HepG2 (cell line): ENCODE measurements at regions of chr10 and their contacts with region 1.

Region 1: DNA sequence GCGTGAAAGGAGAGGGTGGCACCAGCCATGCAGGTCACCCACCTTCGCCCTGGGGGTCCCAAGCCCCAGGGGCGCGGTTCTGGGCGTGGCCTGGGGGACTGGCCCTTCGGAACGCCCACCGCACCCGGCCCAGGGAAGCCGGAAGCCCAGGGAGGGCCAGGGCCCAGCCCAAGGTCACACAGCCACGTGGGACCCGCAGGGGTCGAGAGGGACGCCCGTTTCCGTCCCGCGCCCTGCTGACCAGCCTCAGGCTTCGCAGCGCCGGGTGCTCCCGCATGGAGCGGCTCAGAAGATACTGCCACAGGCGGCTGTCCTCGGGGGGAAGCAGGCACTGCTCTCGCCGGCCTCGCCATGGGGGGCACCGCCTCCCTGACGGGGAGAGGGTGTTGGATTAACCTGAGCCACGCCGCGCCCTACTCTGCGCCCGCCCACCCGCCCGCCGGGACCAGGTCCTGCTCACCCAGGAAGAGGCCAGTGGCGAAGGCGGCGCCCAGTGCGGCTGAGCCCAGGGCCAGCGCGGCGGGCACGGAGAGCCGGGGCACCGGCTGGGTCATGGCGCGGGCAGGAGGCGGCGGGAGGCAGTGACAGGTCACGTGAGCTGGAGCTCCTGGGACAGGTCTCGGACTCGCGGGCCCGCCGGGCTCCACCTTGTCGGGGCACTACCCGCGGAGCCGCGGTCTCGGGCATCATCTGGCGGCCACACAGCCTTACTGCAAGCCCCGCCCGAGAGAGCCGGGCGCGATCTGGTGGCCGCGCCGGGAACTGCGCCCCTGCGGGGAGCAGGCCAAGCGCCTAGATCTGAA is at the start of gene COMTD1:
- DNase-seq: peak; percentile 87
- ATAC-seq: peak; percentile 75
- H3K4me3 ChIP-seq: peak within 1 kb of the TSS; percentile 43 to 76 (median 74); a peak in 5 of 6 replicates
- H3K27ac ChIP-seq: peak within 1 kb of the TSS; percentile 65
- H3K4me1 ChIP-seq: peaks cover 52% of the 10 kb centered on the region
- H3K27me3 ChIP-seq: peaks cover 0 to 1% of the 10 kb centered on the region in 2 experiments; a peak in 1 of 5 replicates
- CTCF ChIP-seq: peak; percentile 99
- EP300 ChIP-seq: 0 out of 4 replicates have a peak, but pooled peaks of 1 of the 2 experiments have one; percentile 2
- POLR2A ChIP-seq: peak; percentile 55 to 68; a peak in 3 of 4 replicates
- RAD21 ChIP-seq: peak; percentile 100
- total RNA-seq, gene COMTD1: 9.8 and 18.4 TPM in 2 replicates

Region 2: GRCh38 chr10:74244097-74244685 is 991.4 kb before region 1 on chr10:
- CTCF ChIA-PET with region 1: interaction called, 4 read pairs
- POLR2A ChIA-PET with region 1: no interaction called
- in situ Hi-C with region 1: loop called (anchors 10 kb)
- intact Hi-C with region 1: no loop called
- DNase-seq: peak; percentile 7
- ATAC-seq: no peak
- H3K4me3 ChIP-seq: no peak overlapping the region
- H3K27ac ChIP-seq: no peak overlapping the region
- H3K4me1 ChIP-seq: no peaks in the 10 kb centered on the region
- H3K27me3 ChIP-seq: no peaks in the 10 kb centered on the region
- CTCF ChIP-seq: peak; percentile 44
- EP300 ChIP-seq: no peak
- POLR2A ChIP-seq: no peak
- RAD21 ChIP-seq: no peak

Region 3: DNA sequence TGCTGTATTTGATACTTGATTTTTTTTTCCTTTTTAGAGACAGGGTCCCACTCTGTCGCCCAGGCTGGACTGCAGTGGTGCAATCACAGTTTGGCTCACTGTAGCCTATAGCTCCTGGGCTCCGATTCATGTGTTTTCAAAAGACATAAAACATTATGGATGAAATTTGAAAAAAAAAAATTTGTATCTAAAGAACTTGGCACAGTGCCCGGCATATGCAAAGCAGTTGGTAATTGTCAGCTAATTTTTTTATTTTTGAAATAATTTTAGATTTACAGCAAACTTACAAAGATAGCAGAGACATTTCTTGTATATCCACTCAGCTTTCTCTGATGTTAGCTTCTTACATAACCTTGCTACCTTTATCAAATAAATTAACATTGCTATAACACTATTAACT is 144.4 kb before region 1 on chr10:
- CTCF ChIA-PET with region 1: no interaction called
- POLR2A ChIA-PET with region 1: no interaction called
- in situ Hi-C with region 1: no loop called
- intact Hi-C with region 1: no loop called
- DNase-seq: no peak
- ATAC-seq: no peak
- H3K4me3 ChIP-seq: no peak overlapping the region
- H3K27ac ChIP-seq: no peak overlapping the region
- H3K4me1 ChIP-seq: peaks cover 30% of the 10 kb centered on the region
- H3K27me3 ChIP-seq: peaks cover 2 to 24% of the 10 kb centered on the region in 2 experiments; a peak in 3 of 5 replicates
- CTCF ChIP-seq: no peak
- EP300 ChIP-seq: no peak
- POLR2A ChIP-seq: no peak
- RAD21 ChIP-seq: no peak

Region 4: GRCh38 chr10:75111367-75111906 is 124.1 kb before region 1 on chr10 and contains the start of gene SAMD8:
- CTCF ChIA-PET with region 1: interaction called, 3 read pairs
- POLR2A ChIA-PET with region 1: interaction called, 4 read pairs
- in situ Hi-C with region 1: loop called (anchors 5 kb)
- intact Hi-C with region 1: loop called (anchors 5 kb)
- DNase-seq: peak; percentile 95
- ATAC-seq: peak; percentile 74; the same call in 2 of the 3 replicates
- H3K4me3 ChIP-seq: peak within 1 kb of the TSS; percentile 92 to 95 (median 94)
- H3K27ac ChIP-seq: peak within 1 kb of the TSS; percentile 91
- H3K4me1 ChIP-seq: peaks cover 69% of the 10 kb centered on the region
- H3K27me3 ChIP-seq: no peaks in the 10 kb centered on the region; a peak in 1 of 5 replicates
- CTCF ChIP-seq: peak; percentile 43
- EP300 ChIP-seq: no peak
- POLR2A ChIP-seq: peak in 1 of 2 experiments; percentile 67; a peak in 2 of 4 replicates
- RAD21 ChIP-seq: no peak
- total RNA-seq, gene SAMD8: 10.3 and 10.4 TPM in 2 replicates

Region 5: DNA sequence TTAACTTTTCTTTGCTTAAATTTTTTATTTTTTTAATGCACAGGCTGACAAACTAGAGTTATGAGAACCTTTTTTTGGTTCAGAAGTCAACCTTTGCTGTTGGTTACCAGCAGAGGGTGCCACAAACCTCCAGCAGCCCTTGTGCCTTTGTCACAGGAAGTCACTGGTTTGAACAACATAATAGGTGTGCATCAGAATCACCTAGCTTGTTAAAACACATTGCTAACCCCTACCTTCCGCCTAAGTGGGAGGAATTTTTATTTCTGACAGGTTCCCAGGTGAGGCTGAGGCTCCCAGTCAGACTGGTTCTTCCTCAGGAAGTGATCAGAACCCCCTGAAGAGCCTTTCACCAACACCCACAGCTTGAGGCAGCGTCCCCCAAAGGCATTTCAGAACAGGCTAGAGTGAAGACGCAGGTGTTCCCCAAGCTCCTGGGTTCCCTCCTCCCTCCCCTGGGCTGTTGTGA is 47.6 kb before region 1 on chr10:
- CTCF ChIA-PET with region 1: interaction called, 34 read pairs
- POLR2A ChIA-PET with region 1: interaction called, 11 read pairs
- in situ Hi-C with region 1: loop called (anchors 5 kb)
- intact Hi-C with region 1: loop called (anchors 1 kb)
- DNase-seq: peak; percentile 69
- ATAC-seq: peak; percentile 45
- H3K4me3 ChIP-seq: no peak overlapping the region
- H3K27ac ChIP-seq: no peak overlapping the region
- H3K4me1 ChIP-seq: peaks cover 76% of the 10 kb centered on the region
- H3K27me3 ChIP-seq: no peaks in the 10 kb centered on the region
- CTCF ChIP-seq: peak; percentile 78
- EP300 ChIP-seq: no peak
- POLR2A ChIP-seq: no peak
- RAD21 ChIP-seq: peak; percentile 79